Activated CD8-positive, alpha-beta memory T cell treated with anti-CD3 and anti-CD28 coated beads, Interleukin-2, amount 10 ng/mL, durations not matched to agents 7 days and 5 days (primary cell): ENCODE measurements at regions of chr10 and their contacts with region 1.

Region 1: DNA sequence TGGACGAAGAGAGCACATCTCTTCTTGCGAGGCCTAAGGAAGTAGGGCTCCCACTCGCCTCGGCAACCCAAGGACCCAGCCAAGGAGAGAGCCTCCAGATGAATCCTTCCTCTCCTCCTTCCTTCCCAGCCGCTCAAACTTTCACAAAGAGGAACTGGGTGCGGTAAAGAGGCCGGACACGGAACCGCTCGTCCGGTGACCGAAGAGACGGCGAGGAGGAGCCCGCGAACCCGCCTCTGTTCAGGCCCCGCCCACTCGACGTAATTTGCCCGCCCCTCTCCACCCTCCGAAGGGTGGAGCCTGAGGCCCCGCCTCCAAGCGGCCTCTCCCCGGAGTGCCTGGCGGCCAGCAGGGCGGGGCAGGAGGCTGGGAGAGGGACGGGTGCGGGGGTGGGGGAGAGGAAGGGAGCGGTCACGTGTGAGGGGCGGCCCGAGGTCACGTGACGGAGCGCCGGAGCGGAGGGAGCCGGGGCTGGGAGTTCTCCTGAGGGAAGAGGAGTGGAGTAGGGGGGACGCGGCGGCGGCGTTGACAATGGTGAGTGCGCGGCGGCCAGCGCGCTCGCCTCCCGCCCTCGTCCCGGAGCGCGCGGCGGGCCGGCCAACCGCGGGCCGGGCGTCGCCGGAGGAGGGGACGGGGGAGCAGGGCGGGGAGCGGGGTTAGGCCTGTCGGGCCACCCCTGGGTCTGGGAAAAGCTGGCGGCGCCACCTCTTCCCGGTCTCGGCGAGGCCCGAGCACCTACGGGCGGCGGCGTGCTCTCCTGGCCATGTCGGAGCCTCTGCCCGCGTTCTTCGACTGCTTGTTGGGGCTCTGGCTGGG is at the start of gene VPS26A:
- DNase-seq: peak; percentile 99
- ATAC-seq: peak; percentile 92
- H3K4me3 Mint-ChIP-seq: peak within 1 kb of the TSS; percentile 89
- H3K27ac Mint-ChIP-seq: peak within 1 kb of the TSS; percentile 94
- H3K4me1 Mint-ChIP-seq: peaks cover 29% of the 10 kb centered on the region
- H3K27me3 Mint-ChIP-seq: no peaks in the 10 kb centered on the region
- total RNA-seq, gene VPS26A: 53.6 to 58.1 TPM

Region 2: GRCh38 chr10:69033256-69033655 is 90.7 kb before region 1 on chr10:
- CTCF ChIA-PET with region 1: no interaction called
- DNase-seq: no peak
- ATAC-seq: no peak
- H3K4me3 Mint-ChIP-seq: no peak overlapping the region
- H3K27ac Mint-ChIP-seq: no peak overlapping the region
- H3K4me1 Mint-ChIP-seq: peaks cover 4% of the 10 kb centered on the region
- H3K27me3 Mint-ChIP-seq: no peaks in the 10 kb centered on the region

Region 3: DNA sequence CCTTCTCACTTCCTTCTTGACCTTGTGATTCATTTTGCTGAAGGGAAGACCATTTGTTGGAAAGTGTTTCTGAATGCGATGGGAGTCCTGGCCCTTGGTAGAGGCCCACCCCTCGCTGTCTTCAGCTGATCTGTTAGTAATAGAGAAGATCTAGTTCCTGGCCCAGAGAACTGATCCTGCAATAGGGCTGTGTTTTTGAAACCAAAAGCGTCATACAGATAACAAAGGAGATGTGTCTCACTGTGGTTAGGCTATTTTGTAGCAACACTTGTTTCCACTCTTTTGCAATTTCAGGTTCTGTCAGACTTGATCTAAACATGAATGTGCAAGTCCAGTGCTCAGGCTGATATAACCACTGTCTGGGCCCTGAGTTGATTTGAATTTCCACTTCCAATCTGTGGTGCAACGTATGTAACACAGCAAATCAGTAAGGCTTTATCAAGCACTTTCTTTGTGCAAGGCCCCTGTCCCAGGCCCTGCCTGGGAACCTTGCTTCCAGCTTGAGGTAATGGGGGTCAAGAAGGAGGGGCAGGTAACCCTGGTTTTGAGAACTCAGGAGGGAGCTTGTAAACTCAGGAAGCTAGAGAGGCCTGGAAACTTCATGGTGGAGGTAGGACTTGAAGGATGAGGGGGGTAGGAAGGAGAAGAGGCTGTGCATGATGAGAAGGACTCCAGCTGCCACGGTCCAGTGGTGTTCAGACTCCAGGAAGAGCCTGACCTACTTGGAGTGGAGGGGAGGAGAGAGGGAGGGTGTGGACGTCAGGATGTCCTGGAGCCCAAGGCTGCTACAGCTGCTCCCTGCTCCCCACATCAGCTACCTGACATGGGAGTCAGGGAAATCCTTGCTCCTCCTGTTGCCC is 78.3 kb before region 1 on chr10:
- CTCF ChIA-PET with region 1: no interaction called
- DNase-seq: peak; percentile 68
- ATAC-seq: peak; percentile 76
- H3K4me3 Mint-ChIP-seq: peak overlapping the region; percentile 58
- H3K27ac Mint-ChIP-seq: peak overlapping the region; percentile 98
- H3K4me1 Mint-ChIP-seq: peaks cover 57% of the 10 kb centered on the region
- H3K27me3 Mint-ChIP-seq: no peaks in the 10 kb centered on the region

Region 4: GRCh38 chr10:69073026-69073425 is 50.9 kb before region 1 on chr10:
- CTCF ChIA-PET with region 1: no interaction called
- DNase-seq: no peak
- ATAC-seq: no peak
- H3K4me3 Mint-ChIP-seq: no peak overlapping the region
- H3K27ac Mint-ChIP-seq: no peak overlapping the region
- H3K4me1 Mint-ChIP-seq: peaks cover 12% of the 10 kb centered on the region
- H3K27me3 Mint-ChIP-seq: peaks cover 2% of the 10 kb centered on the region

Region 5: DNA sequence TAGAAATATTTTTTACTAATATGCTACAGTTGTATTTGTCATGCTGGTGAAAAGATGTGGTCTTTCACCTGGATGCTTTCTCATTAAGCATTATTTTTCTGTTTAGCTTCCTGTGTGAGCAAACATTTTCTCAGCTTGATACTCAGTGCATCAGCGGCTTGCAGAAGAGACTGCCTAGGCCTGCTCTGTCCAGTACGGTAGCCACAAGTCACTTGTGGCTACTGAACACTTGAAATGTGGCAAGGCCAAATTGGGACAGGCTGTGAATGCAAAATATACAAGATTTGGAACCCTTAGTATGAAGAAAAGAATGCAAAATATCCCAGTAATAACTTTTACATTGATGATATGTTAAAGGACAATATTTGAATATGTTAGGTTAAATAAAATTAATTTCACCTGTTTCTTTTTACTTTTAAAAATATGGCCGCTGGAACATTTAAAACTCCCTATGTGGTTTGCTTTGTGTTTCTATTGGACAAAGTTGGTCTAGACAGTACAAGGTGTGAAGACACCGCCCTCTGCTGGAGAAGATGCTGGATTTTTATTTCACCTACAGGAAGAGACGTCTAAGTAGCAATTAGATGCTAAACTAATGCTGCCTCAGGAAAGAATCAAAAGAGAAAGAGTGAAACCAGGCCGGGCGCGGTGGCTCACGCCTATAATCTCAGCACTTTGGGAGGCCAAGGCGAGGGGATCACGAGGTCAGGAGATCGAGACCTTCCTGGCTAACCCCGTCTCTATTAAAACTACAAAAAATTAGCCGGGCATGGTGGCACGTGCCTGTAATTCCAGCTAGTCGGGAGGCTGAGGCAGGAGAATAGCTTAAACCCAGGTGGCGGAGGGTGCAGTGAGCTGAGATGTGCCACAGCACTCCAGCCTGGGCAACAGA is 30.8 kb before region 1 on chr10:
- CTCF ChIA-PET with region 1: interaction called, 18 read pairs
- DNase-seq: peak; percentile 93
- ATAC-seq: peak; percentile 32
- H3K4me3 Mint-ChIP-seq: peak overlapping the region; percentile 39
- H3K27ac Mint-ChIP-seq: peak overlapping the region; percentile 99
- H3K4me1 Mint-ChIP-seq: peaks cover 68% of the 10 kb centered on the region
- H3K27me3 Mint-ChIP-seq: no peaks in the 10 kb centered on the region

Region 6: GRCh38 chr10:69146759-69147158 is 22.8 kb after region 1 on chr10:
- CTCF ChIA-PET with region 1: no interaction called
- DNase-seq: no peak
- ATAC-seq: no peak
- H3K4me3 Mint-ChIP-seq: no peak overlapping the region
- H3K27ac Mint-ChIP-seq: peak overlapping the region; percentile 44
- H3K4me1 Mint-ChIP-seq: peaks cover 24% of the 10 kb centered on the region
- H3K27me3 Mint-ChIP-seq: no peaks in the 10 kb centered on the region